ENCODE measurements at regions of chr12 and their contacts with region 1.

Region 1: GRCh38 chr12:62631471-62632410 is 165.1 kb downstream of the MON2 start:
- DNase-seq: peak; percentile 57 to 66
- H3K4me3 ChIP-seq: peak overlapping the region; percentile 61
- H3K27ac ChIP-seq: peak overlapping the region; percentile 64
- H3K4me1 ChIP-seq: 0 out of 2 replicates have a peak, but pooled peaks cover 8% of the 10 kb centered on the region
- H3K27me3 ChIP-seq: no peaks in the 10 kb centered on the region
- CTCF ChIP-seq: no peak

Region 2: DNA sequence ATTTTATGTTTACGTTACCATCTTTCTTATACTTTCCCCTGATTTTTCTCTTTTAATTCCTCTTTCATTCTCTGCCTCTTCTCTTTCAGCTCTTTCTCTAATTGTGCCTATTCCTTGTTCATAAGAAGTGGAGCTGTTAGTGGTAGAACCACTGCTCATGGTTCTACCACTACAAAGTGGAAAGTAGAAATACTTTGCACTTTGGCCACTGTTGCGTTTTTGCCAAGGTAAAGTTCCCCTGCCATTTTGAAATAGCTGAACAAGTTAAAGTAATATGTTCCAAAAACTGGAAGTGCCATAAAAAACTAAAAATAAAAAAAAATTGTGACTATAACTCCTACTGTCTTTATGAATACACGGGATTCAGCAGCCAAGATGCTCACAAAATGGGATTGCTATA is 34.5 kb before region 1 on chr12:
- CTCF ChIA-PET with region 1: no interaction called
- POLR2A ChIA-PET with region 1: no interaction called
- intact Hi-C with region 1: no loop called
- DNase-seq: no peak
- H3K4me3 ChIP-seq: no peak overlapping the region
- H3K27ac ChIP-seq: no peak overlapping the region
- H3K4me1 ChIP-seq: peaks cover 20% of the 10 kb centered on the region
- H3K27me3 ChIP-seq: no peaks in the 10 kb centered on the region
- CTCF ChIP-seq: no peak

Region 3: DNA sequence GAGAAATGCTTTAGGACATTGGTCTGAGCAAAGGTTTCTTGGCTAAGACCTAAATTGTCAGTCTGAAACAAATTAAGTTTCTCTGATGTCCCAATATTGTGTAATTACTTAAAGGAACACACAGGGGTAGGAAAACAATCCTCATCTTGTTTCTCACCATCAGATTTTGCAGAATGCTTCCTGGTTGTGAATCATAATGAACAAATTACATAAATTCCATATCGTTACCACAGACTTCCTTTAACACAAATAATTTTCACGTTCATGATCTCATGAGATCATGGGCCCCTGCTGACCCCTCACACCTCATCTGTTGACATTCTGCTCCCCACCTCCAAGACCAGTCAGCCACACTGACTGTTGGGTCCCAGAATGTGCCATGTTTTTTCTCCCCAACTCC is 29.0 kb after region 1 on chr12:
- CTCF ChIA-PET with region 1: interaction called, 13 read pairs
- POLR2A ChIA-PET with region 1: no interaction called
- intact Hi-C with region 1: no loop called
- DNase-seq: peak; percentile 28 to 97
- H3K4me3 ChIP-seq: no peak overlapping the region
- H3K27ac ChIP-seq: peak overlapping the region; percentile 98
- H3K4me1 ChIP-seq: peaks cover 23% of the 10 kb centered on the region
- H3K27me3 ChIP-seq: no peaks in the 10 kb centered on the region
- CTCF ChIP-seq: no peak

Region 4: GRCh38 chr12:62724947-62725447 is 93.3 kb after region 1 on chr12:
- CTCF ChIA-PET with region 1: no interaction called
- POLR2A ChIA-PET with region 1: no interaction called
- intact Hi-C with region 1: loop called (anchors 1 kb)
- DNase-seq: peak; percentile 78 to 99
- H3K4me3 ChIP-seq: peak overlapping the region; percentile 1; the same call in 1 of the 2 replicates
- H3K27ac ChIP-seq: peak overlapping the region; percentile 99
- H3K4me1 ChIP-seq: peaks cover 71% of the 10 kb centered on the region
- H3K27me3 ChIP-seq: no peaks in the 10 kb centered on the region
- CTCF ChIP-seq: no peak